ENCODE measurements at regions of chr15 and their contacts with region 1.

Region 1: GRCh38 chr15:49366496-49366895 is 56.5 kb upstream of the FGF7 start:
- DNase-seq: no peak

Region 2: GRCh38 chr15:49169880-49170597 is 196.5 kb before region 1 on chr15 and contains the start of gene GALK2:
- intact Hi-C with region 1: no loop called
- DNase-seq: peak; percentile 91
- total RNA-seq, gene GALK2: 27.9 TPM

Region 3: DNA sequence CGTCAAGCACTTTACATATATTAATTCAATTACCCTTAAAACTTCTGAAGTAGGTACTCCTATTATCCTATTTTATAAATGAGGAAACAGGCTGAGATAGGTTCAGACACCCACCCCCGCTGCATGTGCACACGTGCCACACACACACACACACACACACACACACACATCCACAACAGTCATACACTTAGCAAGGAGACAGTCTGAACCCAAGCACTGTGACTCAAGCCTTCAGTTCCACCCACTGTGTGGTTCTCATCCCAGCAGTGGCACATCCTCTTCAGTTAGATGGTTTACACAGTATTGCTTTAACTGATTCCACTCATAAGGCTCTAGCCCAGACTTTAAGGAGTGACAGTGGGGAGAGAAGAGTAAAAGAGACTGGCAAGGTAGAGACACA is 34.5 kb before region 1 on chr15:
- intact Hi-C with region 1: no loop called
- DNase-seq: no peak

Region 4: DNA sequence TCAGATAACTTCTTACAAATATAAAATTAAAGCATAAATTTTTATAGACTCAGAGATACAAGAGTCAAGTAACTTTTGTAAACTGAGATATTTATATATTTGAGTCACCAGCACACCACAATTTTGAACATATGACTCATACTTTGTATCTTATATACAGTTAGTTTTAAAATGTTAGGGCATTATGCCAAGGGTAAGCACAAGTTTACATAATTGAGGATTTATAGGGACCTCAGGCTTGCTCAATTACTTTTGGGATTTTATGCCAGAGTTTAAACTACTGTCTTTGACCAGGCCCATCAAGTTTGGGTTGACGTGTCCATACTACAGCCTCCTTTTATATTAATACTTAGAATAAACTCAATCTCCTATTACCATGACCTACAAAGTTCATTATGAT is 49.1 kb after region 1 on chr15:
- intact Hi-C with region 1: loop called (anchors 10 kb)
- DNase-seq: no peak

Region 5: DNA sequence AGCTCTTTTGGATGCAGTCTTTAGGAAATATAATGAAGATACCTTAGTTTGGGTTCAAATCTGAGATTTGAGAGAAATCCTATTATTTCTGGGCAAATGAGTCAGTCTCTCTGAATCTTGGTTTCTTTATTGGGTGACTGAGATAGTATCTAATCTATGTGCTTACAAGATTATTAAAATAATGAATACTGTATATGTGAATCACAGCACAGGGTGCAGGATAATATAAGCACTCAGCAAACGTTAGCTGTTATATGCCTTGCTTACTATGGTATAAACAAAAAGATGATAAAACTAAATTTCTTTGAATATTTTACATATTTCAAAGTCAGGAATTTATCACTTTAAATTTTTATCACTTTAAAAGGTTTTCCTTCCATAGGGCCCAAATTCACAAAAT is 86.1 kb after region 1 on chr15:
- intact Hi-C with region 1: no loop called
- DNase-seq: no peak